ENCODE measurements at regions of chr2 and their contacts with region 1.

Region 1: DNA sequence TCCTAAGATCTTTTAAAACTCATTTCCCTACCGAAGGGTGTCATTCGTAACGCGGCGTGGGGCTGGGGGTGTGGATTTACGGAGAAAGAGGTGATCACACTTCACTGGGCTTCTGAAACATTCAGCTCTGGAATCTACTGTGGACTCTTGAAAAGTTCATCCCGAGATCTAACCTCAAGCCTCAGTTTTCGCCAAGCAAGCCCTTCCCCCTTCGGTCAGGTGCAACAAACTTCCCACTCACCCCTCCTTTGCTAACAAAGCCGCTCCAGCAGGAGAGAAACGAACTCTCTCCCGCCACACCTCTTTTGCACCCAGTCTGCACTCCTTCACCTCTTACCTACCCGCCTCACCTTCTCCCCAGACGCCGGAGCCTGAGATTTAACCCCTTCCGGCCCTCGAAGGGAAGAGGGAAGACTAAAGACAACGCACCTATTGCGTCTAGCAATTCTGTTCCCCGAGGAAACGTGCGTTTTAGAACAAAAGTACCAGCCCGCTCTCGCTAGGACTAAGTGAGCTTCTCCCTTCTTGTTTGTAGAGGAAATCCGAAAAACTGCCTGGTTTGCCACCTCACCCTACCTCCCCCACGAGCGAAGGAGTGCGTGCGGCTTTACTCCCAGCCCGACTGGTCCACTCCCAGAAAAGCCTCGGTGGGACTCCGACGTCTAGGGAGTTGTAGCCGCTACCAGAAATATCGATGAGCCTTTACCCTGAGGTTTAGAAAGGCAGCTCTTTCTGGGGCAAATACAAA is 538 bp upstream of the PEX13 start:
- DNase-seq: peak; percentile 81
- ATAC-seq: peak; percentile 75
- H3K4me3 Mint-ChIP-seq: peak overlapping the region; percentile 98
- H3K27ac Mint-ChIP-seq: peak overlapping the region; percentile 95
- H3K4me1 Mint-ChIP-seq: peaks cover 32% of the 10 kb centered on the region
- H3K27me3 Mint-ChIP-seq: no peaks in the 10 kb centered on the region

Region 2: GRCh38 chr2:60756191-60757041 is 260.6 kb before region 1 on chr2 and contains the start of gene PAPOLG:
- CTCF ChIA-PET with region 1: interaction called, 4 read pairs
- POLR2A ChIA-PET with region 1: no interaction called
- intact Hi-C with region 1: loop called in 1 of 2 experiments (anchors 1 kb)
- DNase-seq: peak; percentile 99
- ATAC-seq: peak; percentile 98
- H3K4me3 Mint-ChIP-seq: peak within 1 kb of the TSS; percentile 99
- H3K27ac Mint-ChIP-seq: peak within 1 kb of the TSS; percentile 100
- H3K4me1 Mint-ChIP-seq: peaks cover 34% of the 10 kb centered on the region
- H3K27me3 Mint-ChIP-seq: no peaks in the 10 kb centered on the region
- total RNA-seq, gene PAPOLG: 13.8 to 14.2 TPM

Region 3: DNA sequence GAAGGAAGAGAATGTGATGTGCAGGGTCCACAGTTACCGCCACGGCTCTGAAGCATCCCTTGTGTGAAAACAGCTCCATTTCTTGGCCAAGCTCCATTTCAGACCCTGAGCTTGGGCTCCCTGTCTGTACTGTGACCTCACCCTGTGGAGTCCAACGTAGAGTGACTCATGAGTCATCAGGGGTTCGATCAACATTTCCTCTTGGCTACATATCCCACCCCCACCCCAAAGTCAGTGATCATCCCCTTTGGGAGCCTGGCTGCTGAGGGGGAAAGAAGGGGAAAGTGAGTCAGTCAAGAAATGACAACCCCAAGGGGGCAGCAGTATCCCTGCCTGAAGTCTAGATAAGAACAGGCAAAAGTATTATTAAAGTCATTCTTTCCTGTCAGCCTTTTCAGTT is 198.7 kb before region 1 on chr2:
- CTCF ChIA-PET with region 1: no interaction called
- POLR2A ChIA-PET with region 1: no interaction called
- intact Hi-C with region 1: loop called in 1 of 2 experiments (anchors 1 kb)
- DNase-seq: peak; percentile 76
- ATAC-seq: peak; percentile 60
- H3K4me3 Mint-ChIP-seq: peak overlapping the region; percentile 29
- H3K27ac Mint-ChIP-seq: peak overlapping the region; percentile 82
- H3K4me1 Mint-ChIP-seq: peaks cover 57% of the 10 kb centered on the region
- H3K27me3 Mint-ChIP-seq: no peaks in the 10 kb centered on the region

Region 4: DNA sequence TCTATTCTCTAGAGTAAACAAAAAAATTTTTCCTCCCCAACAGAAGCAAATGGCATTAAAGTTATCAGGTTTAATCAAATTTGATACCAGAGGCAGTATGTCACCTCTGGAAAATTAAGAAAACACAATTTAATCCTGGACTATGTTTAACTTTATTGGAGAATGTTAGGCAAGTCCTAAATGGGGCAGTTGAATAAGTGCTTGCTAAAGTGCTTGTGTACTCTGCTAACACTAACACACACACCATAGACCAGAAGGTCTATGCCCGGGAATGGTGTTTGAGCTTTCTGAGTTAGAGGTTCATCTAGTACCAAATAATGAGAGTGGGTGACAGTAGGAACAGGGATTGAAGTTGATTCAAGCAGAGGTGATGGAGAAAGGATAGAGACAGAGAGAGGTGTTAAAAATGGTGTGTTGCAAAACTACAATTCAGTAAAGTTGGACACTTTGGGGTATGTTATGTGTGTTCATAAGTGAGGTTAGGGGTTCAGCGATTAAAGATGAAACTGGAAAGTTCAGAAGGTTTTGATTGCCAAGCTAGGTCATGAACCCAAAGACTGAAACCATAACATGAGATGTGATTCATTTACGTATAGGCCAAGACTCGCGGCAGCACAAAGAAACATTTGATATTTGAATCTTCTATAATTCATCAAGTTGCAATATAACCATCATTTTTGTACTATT is 40.0 kb before region 1 on chr2:
- CTCF ChIA-PET with region 1: no interaction called
- POLR2A ChIA-PET with region 1: no interaction called
- intact Hi-C with region 1: loop called in 1 of 2 experiments (anchors 1 kb)
- DNase-seq: peak; percentile 53
- ATAC-seq: peak; percentile 94
- H3K4me3 Mint-ChIP-seq: peak overlapping the region; percentile 2
- H3K27ac Mint-ChIP-seq: peak overlapping the region; percentile 86
- H3K4me1 Mint-ChIP-seq: peaks cover 44% of the 10 kb centered on the region
- H3K27me3 Mint-ChIP-seq: no peaks in the 10 kb centered on the region

Region 5: DNA sequence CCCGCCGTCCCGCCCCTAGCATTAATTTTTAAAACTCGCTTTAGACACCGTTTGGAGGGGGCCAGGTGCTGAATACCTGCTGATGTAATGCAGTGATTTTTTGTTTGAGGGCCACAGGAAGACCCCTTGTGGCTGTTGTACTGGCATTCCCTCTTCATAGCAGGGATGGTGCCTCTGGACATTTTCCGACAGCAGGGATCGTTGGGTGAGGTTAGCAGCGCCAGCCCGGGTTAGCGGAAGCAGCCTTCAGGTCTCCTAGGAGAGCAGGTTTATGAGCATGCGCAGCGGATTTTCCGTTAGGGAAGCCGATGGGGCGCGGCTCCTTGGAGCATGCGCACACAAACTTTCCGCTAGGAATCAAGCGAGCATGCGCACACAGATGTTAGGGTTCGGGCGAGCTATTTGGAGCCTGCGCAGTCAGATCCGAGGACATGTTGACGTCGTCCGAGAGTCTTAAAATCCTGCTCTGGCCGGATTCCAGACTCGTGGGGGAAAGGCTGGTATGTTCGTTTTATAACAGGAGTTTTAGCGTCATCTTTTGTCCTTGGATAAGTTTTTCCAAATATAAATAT is 127.8 kb after region 1 on chr2:
- CTCF ChIA-PET with region 1: no interaction called
- POLR2A ChIA-PET with region 1: interaction called, 3 read pairs
- intact Hi-C with region 1: loop called (anchors 1 kb)
- DNase-seq: peak; percentile 96
- ATAC-seq: peak; percentile 99
- H3K4me3 Mint-ChIP-seq: peak overlapping the region; percentile 98
- H3K27ac Mint-ChIP-seq: peak overlapping the region; percentile 96
- H3K4me1 Mint-ChIP-seq: peaks cover 4% of the 10 kb centered on the region
- H3K27me3 Mint-ChIP-seq: no peaks in the 10 kb centered on the region

Region 6: DNA sequence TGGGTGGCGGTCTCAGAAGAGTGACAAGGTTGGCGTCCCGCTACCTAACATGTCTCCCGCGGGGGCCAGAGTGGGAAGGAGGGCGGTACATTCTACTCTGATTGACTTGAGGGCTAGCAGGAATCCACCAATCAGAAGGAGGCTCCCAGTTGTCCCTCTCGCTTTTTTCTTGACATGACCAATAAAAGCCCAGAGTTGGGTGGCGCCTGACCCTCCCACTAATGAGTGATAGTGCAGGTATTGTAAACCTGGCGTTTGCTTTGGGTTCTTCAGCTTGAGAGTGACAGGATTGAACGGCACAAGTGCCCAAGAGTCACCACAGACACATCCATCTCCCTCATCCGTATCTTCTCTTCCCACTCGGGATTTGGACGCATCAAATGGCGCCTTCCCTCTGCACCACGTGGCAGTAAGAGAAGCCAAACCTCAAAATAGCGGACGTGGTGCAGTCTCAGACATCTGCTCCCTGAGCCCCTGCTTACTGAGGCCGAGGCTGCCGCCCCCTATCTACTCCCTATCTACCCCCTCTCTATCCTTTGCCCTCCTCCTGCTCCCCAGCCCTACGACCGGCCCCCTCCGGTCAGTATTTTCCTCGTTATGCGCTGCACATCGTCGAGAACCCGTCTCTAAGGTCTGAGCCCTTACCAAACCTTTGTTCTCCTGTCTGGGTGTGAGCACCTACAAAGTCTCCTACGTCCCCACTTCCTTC is 837.6 kb after region 1 on chr2:
- CTCF ChIA-PET with region 1: no interaction called
- POLR2A ChIA-PET with region 1: no interaction called
- intact Hi-C with region 1: loop called (anchors 1 to 5 kb)
- DNase-seq: peak; percentile 93
- ATAC-seq: peak; percentile 94
- H3K4me3 Mint-ChIP-seq: peak overlapping the region; percentile 99
- H3K27ac Mint-ChIP-seq: peak overlapping the region; percentile 94
- H3K4me1 Mint-ChIP-seq: peaks cover 20% of the 10 kb centered on the region
- H3K27me3 Mint-ChIP-seq: no peaks in the 10 kb centered on the region